ENCODE measurements at regions of chr2 and their contacts with region 1.

Region 1: DNA sequence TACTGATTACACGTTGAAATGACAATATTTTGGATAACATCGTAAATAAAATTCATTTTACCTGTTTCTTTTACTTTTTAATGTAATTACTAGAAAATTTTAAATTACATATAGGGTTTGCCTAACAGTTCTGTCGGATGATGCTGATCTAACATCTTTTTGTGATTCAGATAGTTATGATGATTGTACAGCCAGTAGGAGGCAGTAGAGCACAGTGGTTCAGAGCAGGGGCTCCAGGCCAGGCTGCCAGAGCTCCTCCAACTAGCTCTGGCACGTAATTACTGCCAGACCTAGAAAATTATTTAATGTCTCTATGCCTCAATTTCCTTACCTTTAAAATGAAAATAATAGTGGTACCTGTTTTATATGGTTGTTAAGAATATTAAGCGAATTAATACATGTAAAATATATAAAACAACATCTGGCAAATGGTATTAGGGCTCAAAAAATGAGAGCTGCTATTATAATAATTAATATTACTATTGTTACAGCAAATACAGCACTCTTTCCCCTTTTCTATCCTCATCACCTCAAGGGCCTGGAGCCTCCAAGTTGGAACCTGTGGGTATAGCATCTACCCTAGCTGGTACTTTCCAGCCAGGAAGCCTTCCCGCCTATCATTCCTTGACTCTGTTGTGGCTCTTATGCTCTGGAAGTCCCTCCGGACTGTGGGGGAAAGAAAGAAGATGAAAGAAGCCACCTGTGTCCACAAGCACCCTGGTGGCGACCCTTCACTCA is 47.7 kb upstream of the PLA2R1 start:
- DNase-seq: peak; percentile 45 to 72 (median 64)
- ATAC-seq: peak; percentile 89 to 100 (median 96)
- H3K4me3 ChIP-seq: no peak overlapping the region
- H3K27ac ChIP-seq: no peak overlapping the region
- H3K4me1 ChIP-seq: no peaks in the 10 kb centered on the region
- H3K27me3 ChIP-seq: no peaks in the 10 kb centered on the region
- CTCF ChIP-seq: peak; percentile 46 to 74 (median 66)

Region 2: DNA sequence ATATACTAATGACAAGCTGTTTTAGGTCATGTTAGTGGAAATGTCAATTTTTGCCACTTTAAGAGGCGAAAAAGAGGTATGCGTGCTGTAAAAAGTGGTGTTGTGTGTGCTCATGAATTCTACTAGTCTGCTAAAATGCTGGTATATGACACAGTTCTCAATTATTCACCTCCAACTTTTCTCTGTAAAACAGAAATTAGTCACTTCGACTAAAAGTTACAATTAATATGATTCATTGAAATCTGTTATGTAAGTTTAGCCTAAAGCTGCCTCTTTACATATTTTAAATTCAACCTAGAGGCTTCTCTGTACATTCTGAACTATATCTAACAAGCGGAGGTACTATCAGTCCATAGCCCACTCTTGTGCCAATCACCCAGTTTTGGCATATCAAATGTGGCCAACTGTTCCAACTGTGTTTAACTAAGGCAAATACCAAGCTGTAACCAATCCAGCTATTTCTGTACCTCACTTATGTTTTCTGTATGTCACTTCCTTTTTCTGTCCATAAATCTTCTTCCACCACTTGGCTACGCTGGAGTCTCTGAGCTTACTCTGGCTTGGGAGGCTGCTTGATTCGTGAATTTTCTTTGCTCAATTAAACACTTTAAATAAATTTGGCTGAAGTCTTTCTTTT is 514.6 kb before region 1 on chr2:
- intact Hi-C with region 1: no loop called
- DNase-seq: no peak
- ATAC-seq: peak in 1 of 4 donors; percentile 36
- H3K4me3 ChIP-seq: no peak overlapping the region
- H3K27ac ChIP-seq: no peak overlapping the region
- H3K4me1 ChIP-seq: peaks cover 0 to 16% (median 4%) of the 10 kb centered on the region in 3 donors
- H3K27me3 ChIP-seq: no peaks in the 10 kb centered on the region
- CTCF ChIP-seq: no peak

Region 3: DNA sequence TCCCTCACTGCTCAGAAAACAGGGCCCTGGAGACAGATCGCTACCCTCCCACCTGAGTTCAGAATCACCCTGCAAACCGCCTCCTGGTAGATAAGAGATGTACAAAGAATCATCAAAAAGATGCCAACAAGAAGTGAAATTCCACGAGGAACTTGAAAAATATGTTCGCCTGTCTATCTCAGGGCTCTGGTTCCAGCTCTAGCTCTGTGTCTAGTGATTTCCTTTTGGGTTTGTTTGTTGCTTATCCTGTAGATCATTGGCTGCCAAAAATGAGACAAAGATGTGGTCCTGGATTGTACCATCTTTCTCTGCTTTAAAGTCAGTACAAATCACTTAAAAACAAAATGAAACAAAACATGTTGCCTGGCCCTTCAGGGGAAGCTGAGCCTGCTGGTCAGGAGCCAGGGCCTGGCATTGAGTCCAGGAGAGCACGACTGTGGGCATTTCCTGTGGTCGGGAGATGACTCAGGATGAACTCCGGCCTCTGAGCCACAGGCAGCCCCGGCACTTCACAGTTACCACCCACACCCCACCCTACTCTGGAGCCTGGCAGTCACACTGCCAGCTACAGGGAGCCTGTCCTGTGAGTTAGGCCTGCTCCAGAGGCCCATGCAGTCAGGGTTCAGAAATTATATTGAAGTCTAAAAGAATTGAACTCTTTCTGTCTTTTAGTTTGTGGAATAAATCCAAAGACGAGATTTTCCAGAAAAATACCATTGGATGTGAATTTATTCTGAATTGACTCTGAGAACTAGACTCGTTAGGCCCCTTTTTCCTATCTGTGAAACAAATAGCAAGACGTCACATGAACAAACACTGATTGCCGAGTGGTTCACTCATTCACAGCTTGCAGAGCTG is 97.9 kb after region 1 on chr2:
- intact Hi-C with region 1: loop called in 1 of 3 experiments (anchors 10 kb)
- DNase-seq: peak in 4 of 6 donors; percentile 51 to 68 (median 58)
- ATAC-seq: peak; percentile 45 to 77 (median 76)
- H3K4me3 ChIP-seq: no peak overlapping the region
- H3K27ac ChIP-seq: peak overlapping the region in 2 of 4 donors; percentile 54 to 66
- H3K4me1 ChIP-seq: peaks cover 4 to 16% (median 5%) of the 10 kb centered on the region in 3 donors
- H3K27me3 ChIP-seq: no peaks in the 10 kb centered on the region
- CTCF ChIP-seq: no peak

Region 4: GRCh38 chr2:160432633-160433032 is 322.5 kb after region 1 on chr2:
- intact Hi-C with region 1: loop called in 1 of 3 experiments (anchors 10 kb)
- DNase-seq: no peak
- ATAC-seq: peak in 1 of 4 donors; percentile 9
- H3K4me3 ChIP-seq: no peak overlapping the region
- H3K27ac ChIP-seq: no peak overlapping the region
- H3K4me1 ChIP-seq: peaks cover 0 to 9% (median 4%) of the 10 kb centered on the region in 3 donors
- H3K27me3 ChIP-seq: no peaks in the 10 kb centered on the region
- CTCF ChIP-seq: no peak

Measured in pancreas (tissue), 10 donors.